ENCODE measurements at regions of chr13 and their contacts with region 1.

Region 1: DNA sequence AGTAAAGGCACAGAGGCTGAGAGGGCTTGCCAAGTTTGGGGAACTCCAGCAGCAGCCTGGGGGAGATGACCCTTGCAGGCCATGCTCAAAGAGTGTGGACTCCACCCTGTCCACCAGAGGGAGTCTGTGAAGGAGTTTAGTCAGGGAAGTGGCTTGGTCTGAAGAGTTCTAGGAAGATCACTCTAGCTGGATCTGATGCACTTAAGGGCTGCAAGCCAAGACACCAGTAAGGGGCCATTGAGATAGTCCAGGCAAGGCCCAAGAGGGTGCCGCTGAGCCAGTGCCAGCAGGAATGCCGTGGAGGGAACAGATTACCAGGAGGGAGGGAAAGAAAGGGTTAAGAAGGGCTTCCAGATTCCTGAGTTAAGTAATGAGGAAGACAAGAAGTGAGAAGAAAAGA is 68.7 kb downstream of the ZAR1L start:
- DNase-seq: peak in 3 of 5 donors; percentile 1 to 9 (median 3)
- H3K4me3 ChIP-seq: no peak overlapping the region
- H3K4me3 Mint-ChIP-seq: no peak overlapping the region
- H3K27ac ChIP-seq: no peak overlapping the region
- H3K27ac Mint-ChIP-seq: peak overlapping the region in 1 of 7 donors; percentile 58
- H3K4me1 ChIP-seq: no peaks in the 10 kb centered on the region
- H3K4me1 Mint-ChIP-seq: no peaks in the 10 kb centered on the region
- H3K27me3 ChIP-seq: no peaks in the 10 kb centered on the region
- H3K27me3 Mint-ChIP-seq: no peaks in the 10 kb centered on the region

Region 2: GRCh38 chr13:31179754-31180153 is 1066.7 kb before region 1 on chr13:
- CTCF ChIA-PET with region 1: no interaction called
- POLR2A ChIA-PET with region 1: no interaction called
- intact Hi-C with region 1: no loop called
- DNase-seq: no peak
- H3K4me3 ChIP-seq: no peak overlapping the region
- H3K4me3 Mint-ChIP-seq: no peak overlapping the region
- H3K27ac ChIP-seq: no peak overlapping the region
- H3K27ac Mint-ChIP-seq: no peak overlapping the region
- H3K4me1 ChIP-seq: no peaks in the 10 kb centered on the region
- H3K4me1 Mint-ChIP-seq: peaks cover 0 to 5% (median 1%) of the 10 kb centered on the region in 4 donors
- H3K27me3 ChIP-seq: no peaks in the 10 kb centered on the region
- H3K27me3 Mint-ChIP-seq: peaks cover 0 to 2% of the 10 kb centered on the region in 2 donors

Region 3: DNA sequence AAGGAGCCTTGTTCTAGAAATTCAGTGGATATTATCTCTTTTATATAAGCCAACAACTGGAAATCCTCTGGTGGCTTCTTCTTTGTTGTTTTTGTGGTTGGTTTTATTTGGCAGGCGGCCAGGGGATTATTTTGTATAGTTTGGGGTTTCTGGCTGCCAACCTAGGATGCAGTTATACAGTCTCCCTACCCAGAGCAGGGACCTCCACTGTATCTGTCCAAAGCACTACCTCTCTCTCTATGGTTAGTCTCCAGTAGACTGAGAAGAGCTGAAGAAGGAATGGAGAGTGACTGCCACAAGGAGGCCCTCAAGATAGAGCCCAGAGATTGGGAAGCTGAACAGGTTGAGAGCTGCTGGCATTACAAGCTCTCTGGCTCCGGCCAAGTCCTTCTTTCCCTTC is 11.5 kb before region 1 on chr13:
- CTCF ChIA-PET with region 1: interaction called, 11 read pairs
- POLR2A ChIA-PET with region 1: no interaction called
- intact Hi-C with region 1: no loop called
- DNase-seq: peak in 4 of 5 donors; percentile 20 to 31 (median 28)
- H3K4me3 ChIP-seq: no peak overlapping the region
- H3K4me3 Mint-ChIP-seq: peak overlapping the region in 2 of 8 donors; percentile 20 to 34
- H3K27ac ChIP-seq: no peak overlapping the region
- H3K27ac Mint-ChIP-seq: peak overlapping the region in 4 of 7 donors; percentile 31 to 46 (median 40)
- H3K4me1 ChIP-seq: peaks cover 3% of the 10 kb centered on the region
- H3K4me1 Mint-ChIP-seq: peaks cover 7 to 22% (median 11%) of the 10 kb centered on the region in 4 donors
- H3K27me3 ChIP-seq: no peaks in the 10 kb centered on the region
- H3K27me3 Mint-ChIP-seq: no peaks in the 10 kb centered on the region